CD4-positive, alpha-beta memory T cell (primary cell): ENCODE measurements at regions of chr17 and their contacts with region 1.

Region 1: DNA sequence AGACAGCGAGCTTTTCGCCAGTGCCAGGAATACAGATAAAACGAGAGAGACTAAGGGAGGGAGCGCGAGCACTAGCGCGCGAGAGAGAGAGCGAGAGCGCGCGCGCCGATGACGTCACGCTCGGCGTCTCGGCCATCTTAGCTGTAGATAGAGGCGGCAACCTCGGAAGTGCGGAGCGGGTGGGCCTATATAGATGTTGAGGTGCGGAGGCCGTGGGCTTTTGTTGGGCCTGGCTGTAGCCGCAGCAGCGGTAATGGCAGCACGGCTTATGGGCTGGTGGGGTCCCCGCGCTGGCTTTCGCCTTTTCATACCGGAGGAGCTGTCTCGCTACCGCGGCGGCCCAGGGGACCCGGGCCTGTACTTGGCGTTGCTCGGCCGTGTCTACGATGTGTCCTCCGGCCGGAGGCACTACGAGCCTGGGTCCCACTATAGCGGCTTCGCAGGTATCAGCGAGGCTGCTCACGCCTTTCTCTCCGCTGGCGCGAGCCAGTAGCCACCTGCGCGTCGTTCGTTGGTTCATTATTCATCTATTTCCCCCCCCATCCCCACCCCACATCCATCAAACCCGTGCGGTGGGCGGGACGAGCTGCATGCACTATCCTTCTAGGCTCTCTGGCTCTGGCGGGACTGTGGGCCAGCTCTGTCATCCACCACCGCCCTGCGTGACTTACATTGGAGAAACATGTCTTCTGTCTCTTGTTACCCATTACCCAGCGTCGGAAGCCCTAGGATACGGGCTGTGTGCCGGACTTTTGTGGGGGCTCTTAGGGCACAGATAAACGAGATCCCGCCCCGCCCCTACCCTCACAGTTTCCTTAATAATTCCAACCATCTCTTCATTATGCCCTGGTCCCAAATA is 795 bp downstream of the CYB5D2 start:
- DNase-seq: peak; percentile 89 to 94 (median 93)
- H3K4me3 ChIP-seq: peak overlapping the region; percentile 40 to 96
- H3K4me3 Mint-ChIP-seq: peak overlapping the region; percentile 99 to 100 (median 99)
- H3K27ac ChIP-seq: peak overlapping the region; percentile 100
- H3K27ac Mint-ChIP-seq: peak overlapping the region; percentile 100
- H3K4me1 ChIP-seq: peaks cover 49% of the 10 kb centered on the region
- H3K4me1 Mint-ChIP-seq: peaks cover 33 to 66% (median 46%) of the 10 kb centered on the region in 4 donors
- H3K27me3 ChIP-seq: no peaks in the 10 kb centered on the region
- H3K27me3 Mint-ChIP-seq: no peaks in the 10 kb centered on the region

Region 2: GRCh38 chr17:3845621-3846441 is 298.0 kb before region 1 on chr17 and contains the start of gene NCBP3:
- CTCF ChIA-PET with region 1: no interaction called
- POLR2A ChIA-PET with region 1: interaction called, 8 read pairs
- intact Hi-C with region 1: loop called (anchors 1 kb)
- DNase-seq: peak; percentile 85 to 93 (median 90)
- H3K4me3 ChIP-seq: peak within 1 kb of the TSS; percentile 38 to 85
- H3K4me3 Mint-ChIP-seq: peak within 1 kb of the TSS; percentile 91 to 96 (median 94)
- H3K27ac ChIP-seq: peak within 1 kb of the TSS; percentile 84
- H3K27ac Mint-ChIP-seq: peak within 1 kb of the TSS; percentile 87 to 94 (median 89)
- H3K4me1 ChIP-seq: peaks cover 30% of the 10 kb centered on the region
- H3K4me1 Mint-ChIP-seq: peaks cover 12 to 35% (median 24%) of the 10 kb centered on the region in 4 donors
- H3K27me3 ChIP-seq: no peaks in the 10 kb centered on the region
- H3K27me3 Mint-ChIP-seq: no peaks in the 10 kb centered on the region
- total RNA-seq, gene NCBP3: 48.5 to 66.7 TPM

Region 3: DNA sequence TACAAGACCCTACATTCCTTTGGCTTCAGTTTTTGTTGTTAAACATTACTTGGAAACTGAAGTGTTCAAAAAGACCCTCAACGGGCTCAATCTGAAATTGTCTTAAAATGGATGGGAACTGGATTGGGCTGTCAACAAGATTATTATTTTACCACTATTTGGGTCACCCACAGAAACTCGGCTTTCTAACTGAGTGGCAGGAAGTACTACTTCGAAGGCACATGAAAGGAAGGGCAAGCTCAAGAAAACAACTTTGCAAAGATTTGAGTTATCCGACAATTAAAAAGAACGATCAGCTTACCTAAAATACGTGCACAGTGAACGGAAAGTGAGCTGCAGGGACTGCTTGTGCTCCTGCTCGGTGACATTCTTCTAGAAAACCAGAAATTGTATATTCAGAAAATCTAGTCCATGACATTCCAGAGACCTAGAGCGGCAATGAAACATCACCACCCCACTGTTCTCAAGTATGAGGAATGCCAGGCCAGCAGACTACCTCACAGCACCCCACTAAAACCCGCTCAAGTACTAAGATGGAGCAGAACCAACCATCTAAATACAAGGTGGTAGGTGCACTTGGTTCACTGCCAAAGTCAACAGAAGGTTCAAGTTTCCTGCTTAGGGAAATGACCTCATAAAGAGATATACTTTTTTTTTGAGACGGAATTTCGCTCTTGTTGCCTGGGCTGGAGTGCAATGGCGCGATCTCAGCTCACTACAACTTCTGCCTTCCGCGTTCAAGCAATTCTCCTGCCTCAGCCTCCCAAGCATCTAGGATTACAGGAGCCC is 61.5 kb before region 1 on chr17:
- CTCF ChIA-PET with region 1: no interaction called
- POLR2A ChIA-PET with region 1: interaction called, 16 read pairs
- intact Hi-C with region 1: no loop called
- DNase-seq: peak in 4 of 5 donors; percentile 13 to 24 (median 18)
- H3K4me3 ChIP-seq: no peak overlapping the region
- H3K4me3 Mint-ChIP-seq: peak overlapping the region; percentile 28 to 68 (median 56)
- H3K27ac ChIP-seq: peak overlapping the region; percentile 18
- H3K27ac Mint-ChIP-seq: peak overlapping the region; percentile 85 to 92 (median 89)
- H3K4me1 ChIP-seq: peaks cover 8% of the 10 kb centered on the region
- H3K4me1 Mint-ChIP-seq: peaks cover 10 to 56% (median 16%) of the 10 kb centered on the region in 4 donors
- H3K27me3 ChIP-seq: no peaks in the 10 kb centered on the region
- H3K27me3 Mint-ChIP-seq: no peaks in the 10 kb centered on the region

Region 4: DNA sequence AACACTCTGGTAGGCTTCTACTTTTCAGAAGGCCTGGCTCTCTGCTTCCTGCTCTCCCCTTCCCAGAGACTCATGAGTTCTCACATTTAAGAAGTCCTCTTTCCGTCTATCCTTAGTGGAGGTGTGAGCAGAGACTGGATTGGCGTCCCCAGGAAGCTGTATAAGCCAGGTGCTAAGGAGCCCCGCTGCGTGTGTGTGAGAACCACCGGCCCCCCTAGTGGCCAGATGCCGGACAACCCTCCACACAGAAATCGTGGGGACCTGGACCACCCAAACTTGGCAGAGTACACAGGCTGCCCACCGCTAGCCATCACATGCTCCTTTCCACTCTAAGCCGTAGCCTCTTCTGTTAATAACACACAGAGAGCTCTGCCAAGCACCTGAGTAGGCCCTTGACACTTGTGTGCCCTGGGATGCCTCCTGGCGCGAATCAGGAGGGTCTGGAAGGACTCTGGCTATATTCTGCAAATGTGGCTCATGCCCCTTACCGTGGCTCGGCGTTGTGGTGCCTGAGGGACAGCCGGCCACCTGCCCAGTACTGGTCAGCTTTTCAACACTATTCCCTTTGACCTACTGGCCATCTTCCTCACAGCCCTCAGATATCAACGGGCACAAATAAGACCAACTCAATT is 13.1 kb after region 1 on chr17:
- CTCF ChIA-PET with region 1: no interaction called
- POLR2A ChIA-PET with region 1: interaction called, 37 read pairs
- intact Hi-C with region 1: no loop called
- DNase-seq: no peak
- H3K4me3 ChIP-seq: no peak overlapping the region
- H3K4me3 Mint-ChIP-seq: no peak overlapping the region
- H3K27ac ChIP-seq: no peak overlapping the region
- H3K27ac Mint-ChIP-seq: peak overlapping the region in 2 of 7 donors; percentile 41 to 64
- H3K4me1 ChIP-seq: peaks cover 9% of the 10 kb centered on the region
- H3K4me1 Mint-ChIP-seq: peaks cover 5 to 29% (median 10%) of the 10 kb centered on the region in 4 donors
- H3K27me3 ChIP-seq: no peaks in the 10 kb centered on the region
- H3K27me3 Mint-ChIP-seq: no peaks in the 10 kb centered on the region

Region 5: DNA sequence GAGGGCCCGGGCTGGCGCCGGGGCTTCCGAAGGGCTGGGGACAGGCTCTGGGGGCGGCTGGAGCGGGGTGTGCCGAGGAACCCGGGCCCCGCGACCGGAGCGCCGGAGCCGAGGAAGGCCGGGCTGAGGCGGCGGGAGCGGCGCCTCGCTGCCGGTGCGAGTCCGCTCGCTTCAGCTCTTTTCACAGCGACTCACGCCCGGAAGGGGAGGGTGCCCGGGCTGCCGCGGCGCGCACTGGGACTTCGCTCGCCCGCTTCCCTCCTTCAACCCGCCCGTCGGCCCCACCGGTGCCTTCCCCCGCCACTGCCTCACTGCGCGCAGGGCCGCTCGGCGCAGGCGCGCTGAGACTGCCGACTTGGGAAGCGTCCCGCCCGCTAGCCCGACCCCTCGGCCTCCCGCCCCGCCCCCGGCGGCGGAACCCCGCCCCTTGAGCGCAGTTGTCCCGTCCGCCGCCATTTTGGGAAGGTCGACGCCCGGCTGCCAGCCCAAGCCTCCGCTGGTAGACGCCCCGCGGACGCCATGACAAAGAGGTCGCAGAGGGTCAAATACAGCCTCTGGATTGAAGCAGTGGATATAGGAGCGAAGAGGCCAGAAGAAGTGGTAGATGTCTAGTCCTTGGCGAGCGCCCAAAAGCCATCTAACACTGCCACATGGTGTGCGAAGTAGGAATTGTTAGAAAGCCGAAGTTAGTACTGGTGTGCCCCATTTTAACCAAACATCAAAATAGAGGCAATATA is 222.7 kb after region 1 on chr17 and contains the start of gene UBE2G1:
- CTCF ChIA-PET with region 1: no interaction called
- POLR2A ChIA-PET with region 1: interaction called, 33 read pairs
- intact Hi-C with region 1: loop called (anchors 1 kb)
- DNase-seq: peak; percentile 97 to 99 (median 98)
- H3K4me3 ChIP-seq: peak within 1 kb of the TSS; percentile 39 to 54
- H3K4me3 Mint-ChIP-seq: peak within 1 kb of the TSS; percentile 85 to 93 (median 90)
- H3K27ac ChIP-seq: peak within 1 kb of the TSS; percentile 85
- H3K27ac Mint-ChIP-seq: peak within 1 kb of the TSS; percentile 82 to 99 (median 99)
- H3K4me1 ChIP-seq: peaks cover 34% of the 10 kb centered on the region
- H3K4me1 Mint-ChIP-seq: peaks cover 20 to 41% (median 29%) of the 10 kb centered on the region in 4 donors
- H3K27me3 ChIP-seq: no peaks in the 10 kb centered on the region
- H3K27me3 Mint-ChIP-seq: no peaks in the 10 kb centered on the region
- total RNA-seq, gene UBE2G1: 56.9 to 61.6 TPM

Region 6: DNA sequence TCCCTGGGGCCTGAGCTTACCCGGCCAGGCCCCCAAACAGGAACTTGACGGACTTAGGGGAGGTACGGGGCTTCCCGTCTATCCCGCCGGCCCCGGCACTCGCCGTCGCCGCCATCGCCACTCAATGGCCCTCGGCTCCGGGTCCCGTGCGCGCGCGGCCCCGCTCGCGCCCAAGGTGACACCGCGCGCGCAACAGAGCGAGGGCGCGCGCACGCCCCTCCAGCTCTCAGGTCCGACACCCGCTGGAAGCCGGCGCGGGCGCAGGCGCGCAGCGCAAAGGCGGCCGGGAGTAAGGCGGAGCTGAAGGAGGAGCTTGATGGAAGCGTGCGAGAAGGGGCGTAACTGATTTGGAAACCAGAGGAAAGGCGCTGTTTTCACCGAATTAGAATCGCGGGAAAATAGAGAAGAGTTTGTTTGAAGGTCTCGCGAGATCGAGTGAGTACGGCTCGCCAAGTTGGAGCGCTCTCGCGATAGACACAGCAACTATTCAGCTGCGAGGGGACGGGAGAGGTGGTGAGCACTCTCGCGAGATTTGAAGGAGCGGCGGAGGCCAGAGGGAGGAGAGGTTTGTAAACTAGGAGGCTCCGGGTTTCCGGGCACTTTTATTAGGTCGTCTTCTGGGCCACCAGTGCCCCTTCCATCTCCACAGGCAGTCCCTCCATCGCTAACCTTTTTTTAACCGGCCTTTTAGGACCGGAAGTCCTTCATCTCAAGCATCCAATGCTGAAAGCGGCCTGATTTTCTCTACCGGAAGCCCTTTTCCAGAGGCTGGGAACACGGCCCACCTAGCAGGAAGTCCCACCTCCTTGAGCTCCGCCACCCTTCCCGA is 796.2 kb after region 1 on chr17 and contains the starts of genes RNF167 and SLC25A11:
- CTCF ChIA-PET with region 1: no interaction called
- POLR2A ChIA-PET with region 1: interaction called, 13 read pairs
- intact Hi-C with region 1: no loop called
- DNase-seq: peak; percentile 96 to 99 (median 99)
- H3K4me3 ChIP-seq: peak within 1 kb of the TSS; percentile 99
- H3K4me3 Mint-ChIP-seq: peak within 1 kb of the TSS; percentile 95 to 100 (median 98)
- H3K27ac ChIP-seq: peak within 1 kb of the TSS; percentile 81
- H3K27ac Mint-ChIP-seq: peak within 1 kb of the TSS; percentile 92 to 100 (median 98)
- H3K4me1 ChIP-seq: peaks cover 57% of the 10 kb centered on the region
- H3K4me1 Mint-ChIP-seq: peaks cover 43 to 72% (median 55%) of the 10 kb centered on the region in 4 donors
- H3K27me3 ChIP-seq: no peaks in the 10 kb centered on the region
- H3K27me3 Mint-ChIP-seq: no peaks in the 10 kb centered on the region
- total RNA-seq, gene RNF167: 154 to 172 TPM
- total RNA-seq, gene SLC25A11: 43.5 to 49.5 TPM